HEK293 (cell line): ENCODE measurements at regions of chr6 and their contacts with region 1.

Region 1: DNA sequence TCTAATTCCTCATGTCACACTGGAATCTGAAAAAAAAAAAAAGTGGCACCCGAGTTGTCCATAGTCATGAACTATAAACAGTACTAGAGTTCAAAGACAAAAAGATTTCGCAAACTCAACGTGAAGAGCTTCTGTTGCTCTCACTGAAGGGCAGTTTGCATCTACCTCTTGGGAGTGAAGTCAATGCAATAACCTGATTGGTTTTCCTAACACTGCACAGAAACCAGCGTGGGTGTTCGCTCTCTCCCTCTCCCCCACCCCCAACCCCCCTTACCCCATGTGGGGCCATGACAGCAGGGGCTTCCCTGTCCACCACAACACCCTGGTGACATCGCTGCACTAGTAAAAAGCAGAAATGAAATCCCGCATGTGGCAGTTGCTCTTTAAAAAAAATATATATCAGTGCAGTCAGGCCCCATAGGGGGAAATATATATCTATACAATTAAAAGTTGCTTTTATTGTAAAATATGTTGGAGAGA is 66.9 kb downstream of the GMPR start:
- H3K4me3 ChIP-seq: no peak overlapping the region
- H3K27ac ChIP-seq: no peak overlapping the region
- H3K4me1 ChIP-seq: no peaks in the 10 kb centered on the region
- CTCF ChIP-seq: no peak

Region 2: DNA sequence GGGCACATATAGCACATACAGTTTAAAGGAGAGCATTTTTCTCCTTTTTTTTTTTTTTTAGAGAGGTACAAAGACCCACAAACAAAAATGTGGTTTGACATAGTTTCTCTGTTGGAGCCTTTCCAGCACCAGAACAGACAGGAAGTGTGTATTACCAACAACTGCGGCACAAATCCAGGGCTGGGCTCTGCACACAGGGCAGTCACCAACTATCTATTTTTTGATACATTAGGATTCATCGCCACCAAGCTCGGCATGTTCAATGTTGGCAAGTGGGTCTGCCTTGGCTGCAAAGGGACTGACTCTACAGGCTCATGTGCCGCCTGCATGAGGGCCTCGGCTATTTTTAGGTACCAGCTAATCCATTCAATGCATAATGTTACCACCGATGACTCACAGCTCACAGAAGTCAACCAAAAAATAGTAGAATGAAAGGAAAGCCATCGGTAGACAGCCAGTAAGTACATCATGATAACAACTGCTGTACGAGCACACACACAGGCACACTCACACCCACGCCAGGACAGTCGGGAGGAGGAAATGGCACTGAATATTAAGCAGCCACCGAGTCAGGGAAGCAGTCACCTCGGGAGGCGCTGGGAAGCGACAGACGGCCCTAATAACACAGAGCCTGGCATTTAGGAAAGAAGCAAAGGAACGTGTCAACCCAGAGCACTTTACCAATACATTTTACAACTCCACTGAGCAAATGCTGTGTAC is 14.7 kb after region 1 on chr6:
- CTCF ChIA-PET with region 1: interaction called, 6 read pairs
- POLR2A ChIA-PET with region 1: interaction called, 12 read pairs
- H3K4me3 ChIP-seq: peak overlapping the region; percentile 17
- H3K27ac ChIP-seq: peak overlapping the region; percentile 59
- H3K4me1 ChIP-seq: peaks cover 11% of the 10 kb centered on the region
- CTCF ChIP-seq: no peak